ENCODE measurements at regions of chr1 and their contacts with region 1.

Region 1: DNA sequence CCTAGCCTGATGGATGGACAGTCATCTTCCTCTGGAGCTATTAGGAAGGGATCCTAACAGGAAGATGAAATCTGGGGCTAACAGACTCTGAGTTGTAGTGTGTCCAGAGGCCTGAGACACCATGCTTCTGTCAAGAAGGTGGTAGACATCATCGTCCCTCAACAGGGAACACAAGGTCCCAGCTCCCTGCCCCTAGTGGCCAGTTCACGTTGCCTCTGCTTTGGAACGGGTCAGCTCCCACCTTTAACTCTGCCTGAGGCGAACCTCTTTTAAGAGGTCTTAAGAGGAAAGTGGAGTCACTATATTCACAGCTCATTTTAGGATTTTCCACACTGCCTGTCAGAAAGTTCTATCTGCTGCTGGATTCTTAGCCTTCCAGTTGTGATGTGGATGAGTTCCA is 28.3 kb downstream of the LRRC71 start:
- DNase-seq: no peak
- H3K4me3 ChIP-seq: no peak overlapping the region
- H3K27ac ChIP-seq: no peak overlapping the region
- H3K4me1 ChIP-seq: no peaks in the 10 kb centered on the region
- H3K27me3 ChIP-seq: no peaks in the 10 kb centered on the region
- CTCF ChIP-seq: peak in 2 of 3 experiments; percentile 8 to 33
- POLR2A ChIP-seq: no peak

Region 2: DNA sequence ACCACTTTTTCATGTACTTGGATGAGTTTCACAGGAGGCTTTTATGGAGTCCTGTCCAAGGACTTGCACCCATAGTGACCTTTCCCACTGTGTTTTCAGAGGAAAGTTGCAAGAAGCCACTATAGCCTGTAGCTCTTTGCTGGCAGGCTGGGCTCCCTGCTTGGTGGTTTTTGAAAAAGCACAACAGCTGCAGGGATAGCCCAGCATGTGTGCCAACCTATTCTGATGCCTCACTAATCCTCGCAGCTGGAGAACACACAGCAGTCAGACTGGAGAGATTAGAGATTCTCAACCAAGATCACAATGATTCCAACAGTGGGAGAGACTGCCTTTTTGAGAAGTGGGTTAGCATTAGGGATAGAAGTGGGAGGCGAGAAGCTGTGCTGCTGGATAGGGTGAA is 120.9 kb after region 1 on chr1:
- intact Hi-C with region 1: loop called (anchors 10 kb)
- DNase-seq: no peak
- H3K4me3 ChIP-seq: no peak overlapping the region
- H3K27ac ChIP-seq: no peak overlapping the region
- H3K4me1 ChIP-seq: no peaks in the 10 kb centered on the region
- H3K27me3 ChIP-seq: no peaks in the 10 kb centered on the region
- CTCF ChIP-seq: no peak
- POLR2A ChIP-seq: no peak

Region 3: DNA sequence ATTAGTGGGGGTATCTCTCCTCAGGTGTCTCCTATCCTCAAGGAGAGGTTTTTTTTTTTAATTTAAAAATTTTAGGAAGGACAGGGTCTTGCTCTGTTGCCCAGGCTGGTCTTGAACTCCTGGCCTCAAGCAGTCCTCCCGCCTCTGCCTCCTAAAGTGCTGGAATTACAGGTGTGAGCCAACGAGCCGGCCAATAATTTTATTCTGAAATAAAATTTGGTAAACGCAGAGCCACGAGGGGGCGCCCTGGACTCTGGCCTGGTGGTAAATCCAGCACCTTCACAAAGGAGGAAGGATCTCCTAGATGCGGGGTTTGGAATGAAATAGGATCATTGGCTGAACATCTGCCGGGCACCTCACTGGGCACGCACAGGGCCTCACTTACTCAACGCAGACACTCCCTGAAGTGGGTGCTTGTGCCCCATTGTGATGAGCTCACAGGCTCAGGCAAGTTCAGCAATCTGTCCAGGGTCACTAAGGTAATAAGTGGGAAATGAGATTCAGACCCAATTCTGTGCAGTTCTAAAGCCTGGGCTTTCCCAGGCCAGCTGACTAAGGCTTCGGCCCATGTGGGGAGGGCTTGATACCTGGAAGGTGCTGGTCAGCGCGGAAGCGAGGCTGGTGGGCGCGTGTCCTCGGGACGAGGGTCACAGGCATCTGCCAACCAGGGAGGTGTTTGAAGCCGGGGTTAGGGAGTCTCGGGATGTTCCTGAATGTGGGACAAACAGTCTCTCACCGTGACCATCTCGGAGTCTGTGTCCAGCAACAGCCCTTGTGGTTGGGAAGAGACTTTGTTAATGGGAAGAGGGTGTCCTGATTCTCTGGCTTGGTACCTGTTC is 222.2 kb after region 1 on chr1:
- intact Hi-C with region 1: no loop called
- DNase-seq: peak; percentile 73
- H3K4me3 ChIP-seq: no peak overlapping the region
- H3K27ac ChIP-seq: no peak overlapping the region
- H3K4me1 ChIP-seq: no peaks in the 10 kb centered on the region
- H3K27me3 ChIP-seq: no peaks in the 10 kb centered on the region
- CTCF ChIP-seq: peak in 2 of 3 experiments; percentile 32 to 44
- POLR2A ChIP-seq: no peak